AG04449 (cell line): ENCODE measurements at regions of chr1 and their contacts with region 1.

Region 1: GRCh38 chr1:36187800-36188593 is 32.0 kb downstream of the MAP7D1 start:
- DNase-seq: peak; percentile 62
- H3K4me3 ChIP-seq: no peak overlapping the region
- CTCF ChIP-seq: peak; percentile 97

Region 2: GRCh38 chr1:36115200-36115669 is 72.8 kb before region 1 on chr1:
- CTCF ChIA-PET with region 1: interaction called, 15 read pairs
- POLR2A ChIA-PET with region 1: interaction called, 3 read pairs
- DNase-seq: peak; percentile 55
- H3K4me3 ChIP-seq: 0 out of 2 replicates have a peak overlapping the region, but pooled peaks have one; percentile 1
- CTCF ChIP-seq: no peak

Region 3: DNA sequence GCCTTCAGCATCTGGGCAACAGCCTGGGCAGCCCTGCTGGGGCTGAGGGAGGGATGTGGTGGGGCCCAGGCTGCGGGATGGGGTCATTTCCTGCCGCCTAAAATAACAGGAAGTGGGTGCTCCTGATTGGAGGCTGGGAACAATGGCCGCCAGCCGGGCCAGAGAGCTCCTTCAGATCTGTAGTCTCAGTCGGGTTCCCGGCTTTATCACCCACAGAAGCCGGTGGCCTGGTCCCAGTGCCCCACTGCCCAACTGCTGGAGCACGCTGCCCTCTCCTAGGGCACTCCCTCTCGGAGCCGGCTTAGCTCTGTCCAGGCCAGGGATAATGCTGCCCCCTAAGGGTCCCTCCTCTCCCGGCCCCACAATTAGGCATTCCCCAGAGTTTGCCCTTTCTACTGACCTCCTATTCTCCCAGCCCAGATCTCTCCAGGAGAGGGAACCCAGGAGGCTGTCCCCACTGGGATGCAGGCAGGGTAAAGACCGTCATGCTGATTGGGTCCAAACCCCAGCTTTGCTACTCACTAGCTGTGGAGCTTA is 27.0 kb before region 1 on chr1:
- CTCF ChIA-PET with region 1: interaction called, 164 read pairs
- POLR2A ChIA-PET with region 1: interaction called, 11 read pairs
- DNase-seq: no peak
- H3K4me3 ChIP-seq: peak overlapping the region; percentile 56
- CTCF ChIP-seq: peak; percentile 33

Region 4: DNA sequence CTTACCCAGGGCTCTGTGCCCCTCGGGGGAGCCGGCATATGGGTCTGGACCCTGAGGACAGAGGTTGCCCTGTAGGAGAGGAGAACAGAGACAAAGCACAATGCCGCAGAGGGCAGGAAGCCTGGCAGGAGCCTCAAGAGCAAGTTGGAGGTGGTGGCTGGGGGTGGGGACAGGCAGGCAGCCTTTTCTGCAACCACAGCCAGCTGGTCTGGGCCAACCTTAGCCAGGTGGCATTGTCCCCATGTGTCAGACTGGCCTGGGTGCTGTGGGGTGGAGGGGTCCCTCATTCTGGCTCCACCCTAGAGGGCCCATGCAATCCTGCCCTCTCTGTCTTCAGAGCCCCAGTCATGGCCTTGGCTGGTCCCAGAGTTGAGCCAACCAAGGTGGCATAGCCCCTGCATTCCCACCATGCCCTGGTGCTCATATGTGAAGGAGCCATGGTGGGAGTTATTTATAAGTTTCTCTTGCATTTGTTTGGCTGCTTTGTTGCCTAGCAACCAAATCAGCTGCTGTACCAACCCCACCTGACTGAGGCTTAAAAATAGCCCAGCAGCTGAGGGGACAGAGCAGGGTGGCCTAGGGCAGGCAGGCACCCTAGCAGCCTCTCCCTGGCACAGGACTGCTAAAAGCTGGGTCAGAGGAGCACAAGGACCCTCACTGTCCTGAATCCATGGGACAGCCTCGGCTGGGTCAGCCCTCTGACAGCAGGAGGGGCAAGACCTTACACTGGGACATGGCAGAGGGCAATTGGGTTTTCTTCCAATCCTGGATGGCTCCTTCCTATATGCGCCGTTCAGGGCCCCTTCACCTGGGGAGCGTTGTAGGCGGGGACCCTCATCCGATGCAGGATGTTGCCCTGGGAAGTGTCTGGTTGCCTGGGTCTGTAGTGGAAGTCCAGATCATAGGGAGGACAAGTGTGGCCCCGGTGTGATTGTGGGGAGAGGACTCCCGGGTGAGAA is 12.6 kb before region 1 on chr1:
- CTCF ChIA-PET with region 1: interaction called, 54 read pairs
- POLR2A ChIA-PET with region 1: no interaction called
- DNase-seq: no peak
- H3K4me3 ChIP-seq: no peak overlapping the region
- CTCF ChIP-seq: no peak

Region 5: GRCh38 chr1:36217670-36218069 is 29.7 kb after region 1 on chr1:
- CTCF ChIA-PET with region 1: interaction called, 14 read pairs
- POLR2A ChIA-PET with region 1: no interaction called
- DNase-seq: no peak
- H3K4me3 ChIP-seq: no peak overlapping the region
- CTCF ChIP-seq: peak; percentile 26

Region 6: GRCh38 chr1:36248250-36248894 is 60.4 kb after region 1 on chr1:
- CTCF ChIA-PET with region 1: no interaction called
- POLR2A ChIA-PET with region 1: no interaction called
- DNase-seq: no peak
- H3K4me3 ChIP-seq: no peak overlapping the region
- CTCF ChIP-seq: no peak

Region 7: DNA sequence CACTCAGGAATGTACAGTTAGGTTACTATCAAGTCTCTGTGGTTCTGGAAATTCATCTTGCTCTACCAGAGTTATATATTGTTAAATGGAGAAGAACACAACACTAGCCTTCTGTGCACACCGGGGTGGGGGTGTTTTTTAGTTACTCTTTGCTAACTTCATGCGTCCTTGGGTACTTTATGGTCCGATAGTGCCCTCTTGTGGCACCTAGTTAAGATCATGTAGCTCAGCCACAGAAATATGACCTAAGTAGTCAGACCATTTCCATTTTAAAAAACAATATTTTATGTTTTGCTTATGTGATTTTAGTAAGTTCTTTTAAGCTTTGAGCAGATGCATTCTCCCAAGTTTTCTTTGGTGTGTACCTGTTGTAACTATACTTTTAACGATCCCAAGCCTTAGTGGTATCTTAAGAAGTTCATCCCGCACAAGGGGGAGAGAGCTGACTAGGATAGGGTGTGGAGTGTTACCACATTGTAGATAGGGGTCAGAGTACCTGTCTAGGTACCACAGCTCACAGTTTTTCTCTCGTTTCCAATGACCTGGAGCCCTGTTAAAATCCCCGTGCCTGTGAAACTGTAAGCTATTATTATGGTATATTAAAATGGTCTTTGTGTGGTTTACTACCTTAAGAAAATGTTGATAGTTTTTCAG is 97.6 kb after region 1 on chr1:
- CTCF ChIA-PET with region 1: interaction called, 27 read pairs
- POLR2A ChIA-PET with region 1: no interaction called
- DNase-seq: peak; percentile 69
- H3K4me3 ChIP-seq: no peak overlapping the region
- CTCF ChIP-seq: peak; percentile 54